ENCODE measurements at regions of chrX and their contacts with region 1.

Region 1: GRCh38 chrX:48989483-48989882 is 12.6 kb downstream of the GRIPAP1 start:
- DNase-seq: no peak
- H3K4me3 Mint-ChIP-seq: no peak overlapping the region
- H3K27ac Mint-ChIP-seq: no peak overlapping the region
- H3K4me1 Mint-ChIP-seq: no peaks in the 10 kb centered on the region
- H3K27me3 Mint-ChIP-seq: no peaks in the 10 kb centered on the region
- CTCF ChIP-seq: no peak

Region 2: DNA sequence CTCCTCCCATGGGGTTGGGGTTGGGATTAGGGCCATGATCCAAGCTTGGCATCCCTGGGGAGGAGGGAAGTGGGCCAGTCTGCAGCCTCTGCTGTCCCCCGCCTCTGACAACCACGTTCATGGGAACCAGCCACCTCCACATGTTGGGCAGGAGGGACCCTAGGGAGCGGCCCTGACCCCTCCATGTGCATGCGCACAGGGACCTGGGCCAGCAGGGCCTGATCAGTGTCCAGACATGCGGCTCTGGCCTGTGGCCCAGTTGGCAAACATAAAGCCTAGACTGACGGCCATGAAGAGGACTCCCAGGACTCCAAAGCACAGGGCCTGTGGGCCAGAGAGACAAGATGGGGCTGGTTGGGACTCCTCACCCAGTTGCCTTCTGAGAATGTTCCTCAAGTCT is 530.8 kb before region 1 on chrX:
- CTCF ChIA-PET with region 1: no interaction called
- intact Hi-C with region 1: no loop called
- DNase-seq: no peak
- H3K4me3 Mint-ChIP-seq: no peak overlapping the region
- H3K27ac Mint-ChIP-seq: no peak overlapping the region
- H3K4me1 Mint-ChIP-seq: peaks cover 5% of the 10 kb centered on the region
- H3K27me3 Mint-ChIP-seq: peaks cover 9% of the 10 kb centered on the region
- CTCF ChIP-seq: no peak

Region 3: DNA sequence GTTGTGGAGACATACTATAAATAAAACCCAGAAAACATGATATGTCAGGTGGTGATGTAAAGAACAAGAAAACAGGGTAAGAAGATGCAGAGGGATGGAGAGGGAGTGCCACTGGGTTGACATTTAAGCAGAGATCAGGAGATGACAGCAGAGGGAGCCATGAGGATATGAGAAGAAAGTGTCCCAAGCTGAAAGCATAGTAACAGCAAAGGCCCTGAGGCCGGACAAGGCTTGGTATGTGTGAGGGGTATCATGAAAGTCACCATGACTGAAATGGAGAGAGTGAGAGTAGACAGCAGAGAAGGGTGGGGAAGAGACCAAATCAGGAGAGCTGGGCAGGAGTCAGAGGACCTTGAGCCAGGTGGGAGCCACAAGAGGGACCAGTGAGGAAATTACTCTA is 130.6 kb after region 1 on chrX:
- CTCF ChIA-PET with region 1: interaction called, 10 read pairs
- intact Hi-C with region 1: no loop called
- DNase-seq: peak; percentile 7
- H3K4me3 Mint-ChIP-seq: no peak overlapping the region
- H3K27ac Mint-ChIP-seq: peak overlapping the region; percentile 45
- H3K4me1 Mint-ChIP-seq: peaks cover 28% of the 10 kb centered on the region
- H3K27me3 Mint-ChIP-seq: no peaks in the 10 kb centered on the region
- CTCF ChIP-seq: no peak

Measured in Calu3 (cell line).